ENCODE measurements at regions of chr1 and their contacts with region 1.

Region 1: GRCh38 chr1:235075188-235075926 is 53.3 kb downstream of the TOMM20 start:
- DNase-seq: peak; percentile 66 to 95
- H3K4me3 ChIP-seq: peak overlapping the region; percentile 61
- H3K27ac ChIP-seq: peak overlapping the region; percentile 100
- H3K4me1 ChIP-seq: peaks cover 94% of the 10 kb centered on the region
- H3K27me3 ChIP-seq: no peaks in the 10 kb centered on the region
- CTCF ChIP-seq: no peak

Region 2: GRCh38 chr1:234564642-234565037 is 510.7 kb before region 1 on chr1:
- CTCF ChIA-PET with region 1: no interaction called
- POLR2A ChIA-PET with region 1: interaction called, 12 read pairs
- intact Hi-C with region 1: no loop called
- DNase-seq: peak; percentile 88 to 99
- H3K4me3 ChIP-seq: no peak overlapping the region
- H3K27ac ChIP-seq: peak overlapping the region; percentile 90
- H3K4me1 ChIP-seq: peaks cover 45% of the 10 kb centered on the region
- H3K27me3 ChIP-seq: no peaks in the 10 kb centered on the region
- CTCF ChIP-seq: no peak

Region 3: GRCh38 chr1:234957330-234958065 is 117.9 kb before region 1 on chr1:
- CTCF ChIA-PET with region 1: no interaction called
- POLR2A ChIA-PET with region 1: interaction called, 13 read pairs
- intact Hi-C with region 1: no loop called
- DNase-seq: peak; percentile 91 to 96
- H3K4me3 ChIP-seq: peak overlapping the region; percentile 37; the same call in 1 of the 2 replicates
- H3K27ac ChIP-seq: peak overlapping the region; percentile 99
- H3K4me1 ChIP-seq: peaks cover 82% of the 10 kb centered on the region
- H3K27me3 ChIP-seq: no peaks in the 10 kb centered on the region
- CTCF ChIP-seq: no peak

Region 4: DNA sequence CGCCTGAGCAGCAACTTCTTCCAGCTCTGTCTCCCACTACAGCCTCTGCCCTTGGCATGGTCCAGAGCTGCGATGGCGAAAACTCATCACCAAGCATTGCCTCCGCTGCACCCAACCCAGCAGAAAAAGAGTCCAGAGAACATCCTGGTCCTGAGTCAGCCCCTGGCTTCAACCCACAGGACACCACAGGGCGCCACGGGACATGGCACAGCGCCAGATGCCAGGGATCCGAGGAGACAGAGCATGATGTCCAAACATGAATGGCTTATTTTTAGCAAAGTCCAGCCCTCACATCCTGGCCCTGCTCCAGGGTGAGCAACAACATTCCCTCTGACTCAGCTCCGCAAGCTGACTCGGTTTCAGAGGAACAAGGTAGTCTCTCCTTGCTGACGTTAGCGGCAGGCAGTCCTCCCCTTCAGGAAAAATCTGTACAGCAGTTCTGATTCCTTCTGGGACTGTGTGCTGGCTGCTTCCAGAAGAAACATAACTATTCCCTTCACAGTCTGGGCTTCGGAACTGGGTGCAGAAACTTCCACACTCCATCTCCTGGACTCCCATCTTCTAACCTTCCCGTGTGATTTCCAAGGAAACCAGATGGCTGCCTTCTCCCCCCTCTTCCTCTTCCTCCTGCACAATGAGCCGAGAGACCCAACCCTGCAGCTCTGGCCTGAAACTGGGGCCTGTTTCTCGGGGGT is 78.0 kb before region 1 on chr1:
- CTCF ChIA-PET with region 1: no interaction called
- POLR2A ChIA-PET with region 1: interaction called, 12 read pairs
- intact Hi-C with region 1: loop called (anchors 1 kb)
- DNase-seq: peak; percentile 99 to 100
- H3K4me3 ChIP-seq: peak overlapping the region; percentile 45
- H3K27ac ChIP-seq: peak overlapping the region; percentile 100
- H3K4me1 ChIP-seq: peaks cover 34% of the 10 kb centered on the region
- H3K27me3 ChIP-seq: no peaks in the 10 kb centered on the region
- CTCF ChIP-seq: no peak

Region 5: DNA sequence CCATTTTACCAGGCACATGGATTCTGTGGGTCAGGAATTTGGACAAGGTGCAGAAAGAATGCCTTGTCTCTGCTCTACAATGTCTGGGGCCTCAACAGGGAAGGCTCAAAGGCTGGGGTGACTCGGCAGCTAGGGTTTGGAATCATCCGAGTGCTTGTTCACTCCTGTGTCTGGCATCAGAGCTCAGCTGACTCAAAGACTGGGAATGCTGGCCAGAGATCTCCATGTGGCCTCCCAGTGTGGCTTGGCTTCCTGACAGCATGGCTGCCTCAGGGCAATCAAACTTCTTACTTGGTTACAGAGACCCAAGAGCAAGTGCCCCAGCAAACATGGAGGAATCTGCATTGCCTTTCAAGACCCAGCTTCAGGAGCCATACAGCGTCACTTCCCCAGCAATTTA is 57.2 kb before region 1 on chr1:
- CTCF ChIA-PET with region 1: no interaction called
- POLR2A ChIA-PET with region 1: interaction called, 10 read pairs
- intact Hi-C with region 1: no loop called
- DNase-seq: peak; percentile 82 to 87
- H3K4me3 ChIP-seq: no peak overlapping the region
- H3K27ac ChIP-seq: peak overlapping the region; percentile 74
- H3K4me1 ChIP-seq: peaks cover 48% of the 10 kb centered on the region
- H3K27me3 ChIP-seq: no peaks in the 10 kb centered on the region
- CTCF ChIP-seq: no peak

Measured in PC-9 (cell line).